Uterus (tissue), 4 donors: ENCODE measurements at regions of chr20 and their contacts with region 1.

Region 1: GRCh38 chr20:17796091-17796563 is 96.4 kb downstream of the BANF2 start:
- DNase-seq: peak; percentile 66 to 75
- H3K4me3 ChIP-seq: no peak overlapping the region
- H3K27ac ChIP-seq: peak overlapping the region; percentile 74 to 84
- H3K4me1 ChIP-seq: peaks cover 0 to 6% of the 10 kb centered on the region in 2 donors
- H3K27me3 ChIP-seq: no peaks in the 10 kb centered on the region
- CTCF ChIP-seq: no peak
- POLR2A ChIP-seq: no peak

Region 2: DNA sequence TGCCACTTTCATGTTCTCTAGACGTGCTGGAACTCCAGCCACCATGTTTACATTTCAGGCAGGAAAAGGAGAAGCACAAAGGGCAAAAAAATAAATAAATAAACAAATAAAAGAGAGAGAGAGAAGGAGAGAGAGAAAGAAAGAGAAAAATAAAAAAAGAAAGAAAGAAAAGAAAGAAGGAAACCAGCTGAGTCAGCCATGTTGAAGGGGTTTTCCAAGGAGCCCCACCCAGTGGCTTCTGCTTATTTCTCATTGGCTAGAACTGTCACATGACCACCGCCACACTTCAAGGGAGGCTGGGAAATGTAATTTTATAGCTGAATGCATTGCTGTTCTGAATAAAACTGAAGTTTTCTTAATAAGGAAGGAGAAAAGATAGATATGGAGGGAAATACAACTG is 336.0 kb before region 1 on chr20:
- intact Hi-C with region 1: no loop called
- DNase-seq: no peak
- H3K4me3 ChIP-seq: no peak overlapping the region
- H3K27ac ChIP-seq: no peak overlapping the region
- H3K4me1 ChIP-seq: no peaks in the 10 kb centered on the region
- H3K27me3 ChIP-seq: no peaks in the 10 kb centered on the region
- CTCF ChIP-seq: no peak
- POLR2A ChIP-seq: no peak

Region 3: DNA sequence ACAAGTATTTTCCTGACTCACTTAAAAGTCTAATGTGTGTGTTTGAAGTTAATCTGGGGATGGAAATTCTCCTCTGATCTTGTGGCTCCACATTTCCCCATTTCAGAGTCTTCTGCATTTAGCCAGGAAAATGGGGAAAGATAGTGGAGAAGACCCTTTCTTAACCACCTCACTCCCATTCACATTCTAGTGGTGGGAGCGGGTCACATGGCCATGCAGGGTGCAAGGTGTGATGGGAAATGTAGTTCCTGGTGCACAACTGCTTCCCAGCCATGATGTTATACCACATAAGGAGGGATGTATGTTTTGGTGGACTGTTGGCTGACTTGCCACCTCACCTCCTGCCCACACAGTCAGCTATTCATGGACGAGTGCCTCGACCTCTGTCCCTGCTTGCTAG is 34.5 kb before region 1 on chr20:
- intact Hi-C with region 1: no loop called
- DNase-seq: no peak
- H3K4me3 ChIP-seq: no peak overlapping the region
- H3K27ac ChIP-seq: no peak overlapping the region
- H3K4me1 ChIP-seq: no peaks in the 10 kb centered on the region
- H3K27me3 ChIP-seq: no peaks in the 10 kb centered on the region
- CTCF ChIP-seq: no peak
- POLR2A ChIP-seq: no peak

Region 4: GRCh38 chr20:17882065-17882833 is 86.1 kb after region 1 on chr20:
- intact Hi-C with region 1: loop called (anchors 5 kb)
- DNase-seq: no peak
- H3K4me3 ChIP-seq: no peak overlapping the region
- H3K27ac ChIP-seq: no peak overlapping the region
- H3K4me1 ChIP-seq: no peaks in the 10 kb centered on the region
- H3K27me3 ChIP-seq: no peaks in the 10 kb centered on the region
- CTCF ChIP-seq: no peak
- POLR2A ChIP-seq: no peak

Region 5: DNA sequence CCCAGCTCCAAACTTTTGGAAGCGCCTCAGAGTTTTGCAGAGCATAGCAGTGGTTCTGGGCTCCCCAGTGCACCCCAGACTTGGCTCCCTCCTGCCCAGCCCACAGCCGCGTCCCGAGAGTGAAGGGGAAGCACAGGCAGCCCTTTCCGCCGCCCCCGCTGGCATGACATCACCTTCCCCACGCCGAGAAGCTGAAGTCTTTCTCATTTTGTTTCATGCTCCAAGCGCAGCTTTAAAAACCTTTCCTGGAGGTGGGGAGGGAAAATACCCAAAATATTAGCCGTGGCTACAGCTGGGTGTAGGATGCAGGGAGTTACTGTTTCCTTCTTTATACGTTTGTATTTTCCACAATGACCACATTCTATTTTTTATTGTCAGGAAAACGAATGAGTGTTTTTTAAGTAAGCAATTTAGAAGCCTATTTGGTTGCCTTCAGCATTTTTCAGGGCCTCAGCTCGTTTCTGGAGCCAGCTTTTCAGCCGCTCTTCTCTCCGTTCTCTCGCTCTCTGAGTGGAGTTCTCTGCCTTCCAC is 99.6 kb after region 1 on chr20:
- intact Hi-C with region 1: no loop called
- DNase-seq: peak; percentile 81
- H3K4me3 ChIP-seq: peak overlapping the region; percentile 36 to 38
- H3K27ac ChIP-seq: peak overlapping the region; percentile 82 to 88
- H3K4me1 ChIP-seq: no peaks in the 10 kb centered on the region
- H3K27me3 ChIP-seq: no peaks in the 10 kb centered on the region
- CTCF ChIP-seq: peak in 1 of 4 experiments; percentile 5
- POLR2A ChIP-seq: peak in 1 of 2 donors; percentile 39